Activated B cell treated with CpG ODN at 0.5 μM for 24 hours (primary cell): ENCODE measurements at regions of chr5 and their contacts with region 1.

Region 1: DNA sequence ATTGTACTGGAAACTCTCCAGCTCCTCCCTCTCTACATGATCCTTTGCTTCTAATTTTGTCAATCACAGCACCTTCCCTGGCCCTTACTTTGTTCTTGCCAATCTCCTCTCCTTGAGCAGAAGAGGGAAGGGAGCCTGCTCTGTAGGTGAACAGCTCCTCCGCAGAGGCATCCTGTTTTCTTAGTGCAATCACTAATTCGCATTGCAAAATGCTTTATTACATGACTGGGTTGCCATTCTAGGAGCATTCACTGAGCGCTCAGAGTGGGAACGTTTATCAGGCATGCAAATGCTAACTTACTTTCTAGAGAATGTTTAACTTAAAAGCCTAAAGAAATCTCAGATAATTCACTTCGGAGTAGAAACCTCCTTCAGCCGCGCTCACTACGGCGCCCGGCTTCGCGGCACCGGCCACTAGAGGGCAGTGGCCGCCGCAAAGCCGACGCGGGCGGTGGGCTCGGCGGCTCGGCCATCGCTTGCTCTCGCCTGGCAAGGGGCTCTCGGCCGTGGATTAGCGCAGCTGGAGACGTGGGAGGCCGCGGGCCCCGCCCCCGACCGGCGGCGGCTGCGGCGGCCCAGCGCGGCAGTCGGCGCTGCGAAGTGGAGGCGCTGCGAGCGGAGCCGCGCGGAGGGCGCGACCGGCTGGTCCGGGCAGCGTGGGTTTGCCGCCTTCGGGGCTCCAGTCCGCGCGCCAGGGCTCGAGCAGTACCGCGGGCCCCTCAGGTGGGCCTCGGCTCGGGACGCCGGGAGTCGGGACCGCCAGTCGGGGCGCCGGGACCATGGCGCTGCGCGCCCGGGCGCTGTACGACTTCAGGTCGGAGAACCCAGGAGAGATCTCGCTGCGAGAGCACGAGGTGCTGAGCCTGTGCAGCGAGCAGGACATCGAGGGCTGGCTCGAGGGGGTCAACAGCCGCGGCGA is at the start of gene SNX18:
- DNase-seq: peak; percentile 92
- ATAC-seq: peak; percentile 88
- H3K4me3 Mint-ChIP-seq: peak within 1 kb of the TSS; percentile 86
- H3K27ac Mint-ChIP-seq: peak within 1 kb of the TSS; percentile 50
- H3K4me1 Mint-ChIP-seq: peaks cover 25% of the 10 kb centered on the region
- H3K27me3 Mint-ChIP-seq: no peaks in the 10 kb centered on the region
- CTCF ChIP-seq: peak; percentile 60
- total RNA-seq, gene SNX18: 59.2 and 63.4 TPM in 2 replicates

Region 2: GRCh38 chr5:52799983-52800393 is 1717.4 kb before region 1 on chr5:
- CTCF ChIA-PET with region 1: no interaction called
- POLR2A ChIA-PET with region 1: no interaction called
- intact Hi-C with region 1: loop called (anchors 5 kb)
- DNase-seq: peak; percentile 91
- ATAC-seq: peak; percentile 88
- H3K4me3 Mint-ChIP-seq: peak overlapping the region; percentile 93
- H3K27ac Mint-ChIP-seq: peak overlapping the region; percentile 90
- H3K4me1 Mint-ChIP-seq: peaks cover 57% of the 10 kb centered on the region
- H3K27me3 Mint-ChIP-seq: no peaks in the 10 kb centered on the region
- CTCF ChIP-seq: no peak

Region 3: DNA sequence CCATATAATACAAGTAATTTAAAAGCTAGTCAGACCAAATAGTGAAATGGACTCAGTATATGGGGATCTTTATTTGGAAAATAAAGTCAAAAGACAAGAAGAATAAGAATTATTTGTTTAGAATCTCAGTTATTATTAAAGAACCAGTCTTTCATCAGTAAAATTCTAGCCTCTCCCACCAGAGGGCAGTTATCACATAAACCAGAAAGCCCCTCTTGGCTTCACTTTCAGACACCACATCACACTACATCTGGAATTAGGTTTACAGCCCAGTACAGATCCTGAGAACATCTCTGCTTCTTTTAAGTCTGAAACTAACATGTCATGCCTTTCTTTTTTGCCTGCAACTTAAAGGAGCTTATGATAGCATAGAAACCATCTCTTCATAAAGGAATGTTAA is 74.2 kb before region 1 on chr5:
- CTCF ChIA-PET with region 1: interaction called, 3 read pairs
- POLR2A ChIA-PET with region 1: no interaction called
- intact Hi-C with region 1: loop called (anchors 2 kb)
- DNase-seq: no peak
- ATAC-seq: no peak
- H3K4me3 Mint-ChIP-seq: no peak overlapping the region
- H3K27ac Mint-ChIP-seq: no peak overlapping the region
- H3K4me1 Mint-ChIP-seq: peaks cover 23% of the 10 kb centered on the region
- H3K27me3 Mint-ChIP-seq: no peaks in the 10 kb centered on the region
- CTCF ChIP-seq: no peak

Region 4: GRCh38 chr5:54610197-54610944 is 92.9 kb after region 1 on chr5:
- CTCF ChIA-PET with region 1: interaction called, 3 read pairs
- POLR2A ChIA-PET with region 1: no interaction called
- intact Hi-C with region 1: loop called (anchors 1 kb)
- DNase-seq: no peak
- ATAC-seq: peak; percentile 94
- H3K4me3 Mint-ChIP-seq: peak overlapping the region; percentile 55
- H3K27ac Mint-ChIP-seq: peak overlapping the region; percentile 71
- H3K4me1 Mint-ChIP-seq: peaks cover 50% of the 10 kb centered on the region
- H3K27me3 Mint-ChIP-seq: no peaks in the 10 kb centered on the region
- CTCF ChIP-seq: no peak

Region 5: GRCh38 chr5:54761213-54761701 is 243.8 kb after region 1 on chr5:
- CTCF ChIA-PET with region 1: interaction called, 14 read pairs
- POLR2A ChIA-PET with region 1: interaction called, 6 read pairs
- intact Hi-C with region 1: no loop called
- DNase-seq: no peak
- ATAC-seq: no peak
- H3K4me3 Mint-ChIP-seq: no peak overlapping the region
- H3K27ac Mint-ChIP-seq: no peak overlapping the region
- H3K4me1 Mint-ChIP-seq: peaks cover 69% of the 10 kb centered on the region
- H3K27me3 Mint-ChIP-seq: no peaks in the 10 kb centered on the region
- CTCF ChIP-seq: no peak

Region 6: DNA sequence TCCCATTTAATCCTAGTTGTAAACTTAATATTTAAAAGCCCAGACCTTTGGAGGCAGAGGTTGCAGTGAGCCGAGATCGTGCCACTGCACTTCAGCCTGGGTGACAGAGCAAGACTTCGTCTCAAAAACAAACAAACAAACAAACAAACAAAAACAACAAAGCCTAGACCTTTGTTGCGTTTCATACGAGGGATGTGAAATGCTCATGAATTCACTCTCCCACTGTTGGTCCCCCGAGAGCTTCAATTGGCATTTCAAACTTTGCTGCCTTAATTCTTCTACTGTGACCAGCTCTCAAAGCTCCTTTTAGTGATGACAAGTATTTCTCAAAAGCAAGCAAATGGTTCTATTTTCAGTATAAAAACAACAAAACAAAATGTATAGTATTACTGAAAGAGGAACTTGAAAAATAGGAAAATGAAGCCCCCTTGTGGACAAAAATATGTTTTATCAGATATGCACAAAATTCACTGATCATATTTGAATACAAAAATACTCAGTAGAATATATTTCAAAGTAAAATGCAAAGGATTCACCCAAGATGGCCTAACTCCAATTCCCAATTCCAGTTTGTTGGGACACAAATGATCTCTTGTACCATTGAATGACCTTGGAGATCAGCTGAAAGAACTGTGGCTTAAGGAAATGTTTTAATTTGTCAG is 327.6 kb after region 1 on chr5:
- CTCF ChIA-PET with region 1: interaction called, 160 read pairs
- POLR2A ChIA-PET with region 1: interaction called, 26 read pairs
- intact Hi-C with region 1: loop called (anchors 1 kb)
- DNase-seq: no peak
- ATAC-seq: peak; percentile 50
- H3K4me3 Mint-ChIP-seq: peak overlapping the region; percentile 69
- H3K27ac Mint-ChIP-seq: peak overlapping the region; percentile 67
- H3K4me1 Mint-ChIP-seq: peaks cover 23% of the 10 kb centered on the region
- H3K27me3 Mint-ChIP-seq: peaks cover 7% of the 10 kb centered on the region
- CTCF ChIP-seq: peak; percentile 28

Region 7: GRCh38 chr5:55146543-55147151 is 629.2 kb after region 1 on chr5:
- CTCF ChIA-PET with region 1: no interaction called
- POLR2A ChIA-PET with region 1: no interaction called
- intact Hi-C with region 1: loop called (anchors 1 kb)
- DNase-seq: peak; percentile 35
- ATAC-seq: peak; percentile 58
- H3K4me3 Mint-ChIP-seq: no peak overlapping the region
- H3K27ac Mint-ChIP-seq: no peak overlapping the region
- H3K4me1 Mint-ChIP-seq: no peaks in the 10 kb centered on the region
- H3K27me3 Mint-ChIP-seq: peaks cover 14% of the 10 kb centered on the region
- CTCF ChIP-seq: peak; percentile 94